ENCODE measurements at regions of chr17 and their contacts with region 1.

Region 1: GRCh38 chr17:41966463-41967140 is at the start of gene CNP:
- DNase-seq: peak; percentile 94
- ATAC-seq: peak; percentile 85
- H3K4me3 ChIP-seq: peak within 1 kb of the TSS; percentile 65 to 91 (median 82)
- H3K4me3 Mint-ChIP-seq: peak within 1 kb of the TSS; percentile 85
- H3K27ac ChIP-seq: peak within 1 kb of the TSS; percentile 67 to 75
- H3K27ac Mint-ChIP-seq: peak within 1 kb of the TSS; percentile 86
- H3K4me1 ChIP-seq: peaks cover 16 to 38% of the 10 kb centered on the region in 2 donors
- H3K4me1 Mint-ChIP-seq: peaks cover 37% of the 10 kb centered on the region
- H3K27me3 ChIP-seq: no peaks in the 10 kb centered on the region
- H3K27me3 Mint-ChIP-seq: no peaks in the 10 kb centered on the region
- CTCF ChIP-seq: no peak
- total RNA-seq, gene CNP: 45.2 and 59.0 TPM in 2 replicates

Region 2: DNA sequence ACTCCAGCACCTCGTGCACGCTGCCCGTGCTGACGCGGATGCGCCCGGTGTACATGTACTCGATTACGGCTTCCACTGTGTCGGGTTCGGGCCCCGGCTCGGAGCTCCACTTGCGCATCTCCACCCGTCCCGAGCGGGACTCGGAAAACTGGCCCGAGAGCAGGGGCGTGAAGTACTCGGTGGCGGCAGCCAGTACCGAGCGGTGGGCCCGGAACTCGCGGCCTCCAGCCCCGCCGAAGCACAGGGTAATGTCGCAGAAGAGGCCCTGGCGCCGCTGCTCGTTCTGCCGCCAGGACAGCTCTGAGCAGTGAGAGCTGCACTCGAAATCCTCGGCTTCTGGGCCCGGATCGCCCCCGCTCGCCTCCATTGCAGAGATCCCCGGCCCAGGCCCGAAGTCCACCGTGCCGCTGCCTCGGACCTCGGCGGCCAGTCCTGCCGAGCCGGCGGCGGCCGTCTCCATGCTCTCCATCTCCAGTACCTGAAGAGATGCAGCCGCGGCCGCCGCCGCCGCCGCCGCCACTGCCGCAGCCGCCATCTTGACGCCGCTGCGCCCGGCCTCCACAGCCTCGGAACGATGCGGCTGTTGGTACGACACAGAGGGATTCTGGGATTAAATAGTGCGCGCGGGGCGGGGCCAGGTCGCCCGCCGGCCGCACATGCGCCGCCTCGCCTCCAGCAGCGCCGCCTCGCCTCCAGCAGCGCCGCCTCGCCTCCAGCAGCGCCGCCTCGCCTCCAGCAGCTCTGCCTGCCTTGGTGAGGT is 101.6 kb before region 1 on chr17 and contains the start of gene KLHL11:
- CTCF ChIA-PET with region 1: interaction called, 4 read pairs
- POLR2A ChIA-PET with region 1: no interaction called
- intact Hi-C with region 1: loop called (anchors 1 kb)
- DNase-seq: peak; percentile 93
- ATAC-seq: peak; percentile 97
- H3K4me3 ChIP-seq: peak within 1 kb of the TSS; percentile 45 to 96 (median 83)
- H3K4me3 Mint-ChIP-seq: no peak within 1 kb of the TSS
- H3K27ac ChIP-seq: peak within 1 kb of the TSS; percentile 72 to 82
- H3K27ac Mint-ChIP-seq: no peak within 1 kb of the TSS
- H3K4me1 ChIP-seq: peaks cover 24 to 27% of the 10 kb centered on the region in 2 donors
- H3K4me1 Mint-ChIP-seq: peaks cover 22% of the 10 kb centered on the region
- H3K27me3 ChIP-seq: no peaks in the 10 kb centered on the region
- H3K27me3 Mint-ChIP-seq: no peaks in the 10 kb centered on the region
- CTCF ChIP-seq: no peak
- total RNA-seq, gene KLHL11: 18.7 and 18.8 TPM in 2 replicates

Region 3: GRCh38 chr17:41992576-41992975 is 26.0 kb after region 1 on chr17:
- CTCF ChIA-PET with region 1: interaction called, 5 read pairs
- POLR2A ChIA-PET with region 1: interaction called, 4 read pairs
- intact Hi-C with region 1: loop called (anchors 1 kb)
- DNase-seq: no peak
- ATAC-seq: no peak
- H3K4me3 ChIP-seq: no peak overlapping the region
- H3K4me3 Mint-ChIP-seq: no peak overlapping the region
- H3K27ac ChIP-seq: no peak overlapping the region
- H3K27ac Mint-ChIP-seq: no peak overlapping the region
- H3K4me1 ChIP-seq: peaks cover 20 to 27% of the 10 kb centered on the region in 2 donors
- H3K4me1 Mint-ChIP-seq: peaks cover 22% of the 10 kb centered on the region
- H3K27me3 ChIP-seq: no peaks in the 10 kb centered on the region
- H3K27me3 Mint-ChIP-seq: no peaks in the 10 kb centered on the region
- CTCF ChIP-seq: no peak

Region 4: DNA sequence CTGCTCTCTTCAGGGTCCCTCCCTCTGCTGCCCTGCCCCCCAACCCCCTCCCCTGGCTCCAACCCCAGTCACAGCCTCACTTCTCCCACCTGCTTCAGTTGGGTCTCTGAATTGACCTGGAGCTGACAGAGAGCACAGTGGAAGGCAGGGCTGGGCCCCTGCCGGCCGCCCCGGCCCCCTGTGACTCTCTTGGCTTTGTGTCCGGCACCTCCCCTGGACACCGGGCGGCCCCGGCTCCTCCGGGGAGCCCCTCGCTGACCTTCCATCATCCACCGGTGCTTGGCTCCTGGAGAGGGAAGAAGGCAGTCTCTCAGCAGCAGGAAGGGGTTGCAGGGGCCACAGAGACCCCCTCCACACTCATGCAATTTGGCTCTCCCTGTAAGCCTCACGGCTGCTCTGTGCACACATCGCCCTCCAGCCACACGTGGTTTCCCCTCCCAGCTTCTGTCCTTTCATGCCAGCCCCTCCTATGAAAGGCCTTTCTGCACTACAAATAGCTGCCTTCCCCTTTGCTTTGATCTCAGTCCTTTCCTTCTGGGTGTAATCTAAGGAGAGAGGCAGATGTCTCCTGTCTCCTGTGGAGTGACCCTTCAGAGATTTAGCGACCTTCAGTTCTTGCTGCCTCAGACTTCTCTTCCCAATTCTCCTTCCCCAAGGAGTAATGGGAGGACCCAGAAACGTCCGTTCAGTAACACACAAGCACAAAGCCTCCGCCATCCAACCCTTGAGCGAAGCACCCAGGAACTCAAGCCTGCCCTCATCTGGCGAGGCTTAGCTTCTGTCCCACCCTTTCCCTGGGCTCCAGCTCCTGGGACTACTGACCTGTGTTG is 61.6 kb after region 1 on chr17:
- CTCF ChIA-PET with region 1: interaction called, 10 read pairs
- POLR2A ChIA-PET with region 1: no interaction called
- intact Hi-C with region 1: loop called (anchors 1 kb)
- DNase-seq: no peak
- ATAC-seq: no peak
- H3K4me3 ChIP-seq: no peak overlapping the region
- H3K4me3 Mint-ChIP-seq: no peak overlapping the region
- H3K27ac ChIP-seq: no peak overlapping the region
- H3K27ac Mint-ChIP-seq: no peak overlapping the region
- H3K4me1 ChIP-seq: peaks cover 11 to 14% of the 10 kb centered on the region in 2 donors
- H3K4me1 Mint-ChIP-seq: peaks cover 13% of the 10 kb centered on the region
- H3K27me3 ChIP-seq: peaks cover 0 to 3% (median 0%) of the 10 kb centered on the region in 4 experiments
- H3K27me3 Mint-ChIP-seq: no peaks in the 10 kb centered on the region
- CTCF ChIP-seq: no peak

Region 5: GRCh38 chr17:42112552-42113176 is 146.1 kb after region 1 on chr17 and contains the start of gene DHX58:
- CTCF ChIA-PET with region 1: interaction called, 115 read pairs
- POLR2A ChIA-PET with region 1: interaction called, 25 read pairs
- intact Hi-C with region 1: loop called (anchors 1 kb)
- DNase-seq: peak; percentile 91
- ATAC-seq: peak; percentile 71
- H3K4me3 ChIP-seq: peak within 1 kb of the TSS; percentile 26 to 77 (median 53)
- H3K4me3 Mint-ChIP-seq: peak within 1 kb of the TSS; percentile 88
- H3K27ac ChIP-seq: peak within 1 kb of the TSS; percentile 85 to 88
- H3K27ac Mint-ChIP-seq: peak within 1 kb of the TSS; percentile 97
- H3K4me1 ChIP-seq: peaks cover 38 to 54% of the 10 kb centered on the region in 2 donors
- H3K4me1 Mint-ChIP-seq: peaks cover 57% of the 10 kb centered on the region
- H3K27me3 ChIP-seq: no peaks in the 10 kb centered on the region
- H3K27me3 Mint-ChIP-seq: no peaks in the 10 kb centered on the region
- CTCF ChIP-seq: no peak
- total RNA-seq, gene DHX58: 34.6 and 39.7 TPM in 2 replicates

Region 6: GRCh38 chr17:42183741-42184711 is 217.4 kb after region 1 on chr17:
- CTCF ChIA-PET with region 1: interaction called, 6 read pairs
- POLR2A ChIA-PET with region 1: interaction called, 3 read pairs
- intact Hi-C with region 1: loop called (anchors 1 kb)
- DNase-seq: peak; percentile 91
- ATAC-seq: peak; percentile 69
- H3K4me3 ChIP-seq: peak overlapping the region; percentile 64 to 81 (median 74)
- H3K4me3 Mint-ChIP-seq: peak overlapping the region; percentile 93
- H3K27ac ChIP-seq: peak overlapping the region; percentile 90 to 95
- H3K27ac Mint-ChIP-seq: peak overlapping the region; percentile 93
- H3K4me1 ChIP-seq: peaks cover 37 to 49% of the 10 kb centered on the region in 2 donors
- H3K4me1 Mint-ChIP-seq: peaks cover 49% of the 10 kb centered on the region
- H3K27me3 ChIP-seq: peaks cover 0 to 17% (median 2%) of the 10 kb centered on the region in 4 experiments
- H3K27me3 Mint-ChIP-seq: no peaks in the 10 kb centered on the region
- CTCF ChIP-seq: peak; percentile 90

Measured in B cell (primary cell).